ENCODE measurements at regions of chr2 and their contacts with region 1.

Region 1: GRCh38 chr2:63841254-63842022 is at the start of gene UGP2:
- DNase-seq: peak; percentile 89
- ATAC-seq: peak; percentile 73
- H3K4me3 Mint-ChIP-seq: peak within 1 kb of the TSS; percentile 95
- H3K27ac Mint-ChIP-seq: peak within 1 kb of the TSS; percentile 98
- H3K4me1 Mint-ChIP-seq: peaks cover 36% of the 10 kb centered on the region
- H3K27me3 Mint-ChIP-seq: peaks cover 2% of the 10 kb centered on the region
- total RNA-seq, gene UGP2: 127 to 139 TPM

Region 2: DNA sequence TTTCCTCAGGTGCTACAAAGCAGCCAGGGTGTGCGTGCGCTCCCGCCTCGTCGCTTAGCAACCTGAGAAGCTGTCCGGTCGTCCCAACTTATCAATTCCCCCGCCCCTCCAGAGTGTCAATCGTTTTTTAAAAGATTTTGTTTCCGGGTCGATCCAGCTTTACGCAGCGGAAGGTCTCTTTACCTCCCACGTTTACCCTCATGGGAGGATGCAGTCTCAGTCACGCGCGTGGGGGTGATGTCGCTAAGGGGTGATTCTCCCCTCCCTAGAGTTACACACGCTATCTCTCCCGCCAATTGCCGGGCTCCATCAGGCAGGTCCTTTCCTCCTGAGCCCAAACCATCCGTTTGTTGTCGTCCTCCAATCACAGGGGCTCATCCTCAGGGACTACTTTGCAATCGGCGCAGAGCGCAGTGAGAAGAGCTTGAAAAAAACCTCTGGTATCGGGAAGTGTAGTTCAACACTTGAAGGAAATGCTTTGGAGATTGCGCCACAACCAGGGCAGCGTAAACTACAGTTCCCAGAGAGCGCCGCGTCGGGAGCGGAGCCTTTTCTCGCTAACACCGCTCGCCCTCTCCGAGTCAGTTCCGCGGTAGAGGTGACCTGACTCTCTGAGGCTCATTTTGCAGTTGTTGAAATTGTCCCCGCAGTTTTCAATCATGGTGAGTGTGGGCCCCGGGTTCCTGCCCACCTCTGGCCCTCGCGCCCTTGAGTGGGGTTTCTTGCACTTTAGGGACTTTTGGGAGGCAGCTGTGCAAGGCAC is 252.9 kb before region 1 on chr2 and contains the starts of genes MDH1 and WDPCP:
- POLR2A ChIA-PET with region 1: interaction called, 36 read pairs
- DNase-seq: peak; percentile 84
- ATAC-seq: peak; percentile 90
- H3K4me3 Mint-ChIP-seq: peak within 1 kb of the TSS; percentile 91
- H3K27ac Mint-ChIP-seq: peak within 1 kb of the TSS; percentile 98
- H3K4me1 Mint-ChIP-seq: peaks cover 21% of the 10 kb centered on the region
- H3K27me3 Mint-ChIP-seq: no peaks in the 10 kb centered on the region
- total RNA-seq, gene MDH1: 161 to 163 TPM
- total RNA-seq, gene WDPCP: 10.5 to 12.0 TPM

Region 3: DNA sequence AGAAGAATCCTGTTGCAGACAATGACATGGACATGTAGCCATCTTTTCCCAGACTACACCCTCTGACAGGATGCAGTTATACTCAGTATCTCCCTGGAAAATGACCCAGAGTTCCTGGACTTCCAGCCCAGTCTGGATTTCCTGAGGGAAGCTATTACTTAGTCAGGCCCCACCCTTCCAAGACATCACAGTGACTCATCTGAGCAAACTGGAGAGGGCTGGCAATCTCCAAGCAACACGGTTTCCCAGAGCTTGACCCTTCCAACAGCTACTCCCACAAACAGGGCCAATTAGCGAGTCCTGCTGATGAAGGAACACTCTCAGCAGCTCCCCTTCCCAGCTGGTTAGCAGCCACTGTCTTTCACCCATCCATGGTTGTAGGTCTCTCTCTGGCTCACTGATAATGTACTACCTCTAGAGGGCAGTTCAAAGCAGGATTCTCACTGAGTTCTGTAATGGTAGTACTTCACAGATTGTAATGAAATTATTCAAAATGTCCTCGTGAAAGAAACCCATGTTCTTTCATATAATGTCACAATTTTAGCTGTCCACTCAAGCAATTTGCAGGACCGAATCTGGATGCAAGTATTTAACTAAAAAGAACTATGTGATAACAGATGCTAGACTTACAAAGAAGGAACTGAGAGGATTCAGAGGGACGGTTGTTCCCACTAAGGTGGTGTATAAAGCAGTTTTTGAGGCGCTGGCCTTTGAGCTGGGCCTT is 142.5 kb before region 1 on chr2:
- POLR2A ChIA-PET with region 1: interaction called, 11 read pairs
- DNase-seq: no peak
- ATAC-seq: peak; percentile 96
- H3K4me3 Mint-ChIP-seq: no peak overlapping the region
- H3K27ac Mint-ChIP-seq: no peak overlapping the region
- H3K4me1 Mint-ChIP-seq: no peaks in the 10 kb centered on the region
- H3K27me3 Mint-ChIP-seq: no peaks in the 10 kb centered on the region

Region 4: DNA sequence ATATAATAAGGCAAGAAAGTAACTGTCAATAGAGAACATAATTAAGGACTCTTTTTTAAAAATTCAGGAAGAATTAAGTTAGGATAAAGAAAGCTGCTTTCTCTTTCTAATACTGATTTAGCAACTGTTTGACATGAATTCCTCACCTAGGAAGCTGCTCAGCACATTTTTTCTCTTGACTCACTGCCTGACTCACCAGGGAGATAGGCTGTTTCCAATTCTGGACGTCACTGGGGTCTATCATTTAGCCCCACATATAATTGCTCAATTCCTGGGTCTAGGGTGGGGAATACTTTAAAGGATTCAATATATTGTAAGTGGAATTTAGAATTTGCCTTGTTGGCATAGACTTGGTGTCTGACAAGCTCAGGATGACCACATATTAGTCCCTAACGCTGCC is 50.5 kb before region 1 on chr2:
- POLR2A ChIA-PET with region 1: no interaction called
- DNase-seq: no peak
- ATAC-seq: no peak
- H3K4me3 Mint-ChIP-seq: no peak overlapping the region
- H3K27ac Mint-ChIP-seq: no peak overlapping the region
- H3K4me1 Mint-ChIP-seq: peaks cover 2% of the 10 kb centered on the region
- H3K27me3 Mint-ChIP-seq: peaks cover 2% of the 10 kb centered on the region

Region 5: DNA sequence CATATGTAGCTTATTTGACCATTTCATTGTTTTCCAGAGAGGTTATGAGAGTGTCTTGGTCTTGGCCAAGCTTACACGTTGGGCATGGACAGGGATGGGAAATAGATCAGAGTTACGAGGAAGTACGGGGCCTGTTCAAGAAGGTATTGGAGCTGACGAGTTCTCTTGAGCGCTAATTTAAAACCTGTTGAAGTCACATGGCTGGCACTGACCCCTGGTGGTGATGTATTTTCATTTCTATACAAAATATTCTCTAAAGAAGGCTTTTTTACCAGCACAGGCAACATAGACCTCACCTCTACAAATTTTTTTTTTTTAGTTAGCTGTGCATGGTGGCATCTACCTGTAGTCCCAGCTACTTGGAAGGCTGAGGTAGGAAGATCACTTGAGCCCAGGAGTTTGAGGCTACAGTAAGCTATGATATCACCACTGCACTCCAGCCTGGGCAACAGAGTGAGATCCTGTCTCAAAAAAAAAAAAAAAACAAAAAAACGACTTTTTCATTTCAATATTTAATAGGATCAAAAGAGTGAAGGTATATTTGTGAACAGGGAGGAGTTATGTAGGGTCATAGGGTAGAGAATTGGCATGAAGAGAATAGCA is 19.9 kb after region 1 on chr2:
- POLR2A ChIA-PET with region 1: interaction called, 286 read pairs
- DNase-seq: peak; percentile 34
- ATAC-seq: no peak
- H3K4me3 Mint-ChIP-seq: no peak overlapping the region
- H3K27ac Mint-ChIP-seq: no peak overlapping the region
- H3K4me1 Mint-ChIP-seq: peaks cover 29% of the 10 kb centered on the region
- H3K27me3 Mint-ChIP-seq: no peaks in the 10 kb centered on the region

Region 6: DNA sequence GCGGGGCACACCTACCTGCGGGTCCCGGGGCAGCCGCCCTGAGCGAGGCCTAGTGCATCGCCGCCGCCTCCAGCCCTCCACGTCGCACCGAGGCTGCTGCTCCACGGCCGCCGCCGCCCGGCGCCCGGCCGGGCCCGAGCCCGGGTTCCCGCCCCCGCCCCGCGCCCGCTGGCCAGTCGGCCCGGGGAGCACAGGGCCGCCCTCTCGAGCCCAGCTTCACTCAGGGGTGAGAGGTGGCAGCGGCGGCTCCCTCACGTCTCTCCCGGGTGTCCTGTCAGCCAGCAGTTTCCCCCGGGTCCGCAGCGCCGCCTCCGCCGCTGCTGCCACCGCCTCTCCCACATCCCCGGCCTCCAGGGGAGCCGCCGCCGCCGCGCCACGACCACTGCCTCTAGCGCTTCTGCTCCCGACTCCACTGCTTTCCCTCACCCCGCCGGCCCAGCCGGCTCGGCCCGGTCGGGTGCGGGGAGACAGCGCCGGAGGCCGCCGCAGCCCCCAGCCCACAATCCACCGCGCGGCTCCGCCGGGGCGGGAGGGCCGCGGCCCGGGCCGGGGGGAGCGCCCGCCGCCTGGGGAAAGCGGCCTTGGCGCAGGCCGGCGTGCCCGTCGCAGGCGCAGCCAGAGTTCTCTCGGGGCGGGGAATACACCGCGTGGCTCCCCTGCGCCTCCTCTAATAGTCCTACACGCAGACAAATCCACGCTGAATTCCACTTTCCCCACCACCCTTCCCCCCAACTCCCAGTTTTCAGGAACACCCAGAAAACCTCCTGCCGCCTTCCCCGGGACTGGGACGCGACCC is 177.7 kb after region 1 on chr2 and contains the start of gene VPS54:
- POLR2A ChIA-PET with region 1: interaction called, 13 read pairs
- DNase-seq: peak; percentile 80
- ATAC-seq: peak; percentile 75
- H3K4me3 Mint-ChIP-seq: peak within 1 kb of the TSS; percentile 98
- H3K27ac Mint-ChIP-seq: peak within 1 kb of the TSS; percentile 99
- H3K4me1 Mint-ChIP-seq: peaks cover 31% of the 10 kb centered on the region
- H3K27me3 Mint-ChIP-seq: no peaks in the 10 kb centered on the region
- total RNA-seq, gene VPS54: 15.2 to 16.0 TPM

Measured in activated naive CD8-positive, alpha-beta T cell treated with anti-CD3 and anti-CD28 coated beads, Interleukin-2, amount 10 ng/mL, durations not matched to agents 7 days and 5 days (primary cell).